Left ventricle myocardium inferior (tissue), 1 donor: ENCODE measurements at regions of chr6 and their contacts with region 1.

Region 1: DNA sequence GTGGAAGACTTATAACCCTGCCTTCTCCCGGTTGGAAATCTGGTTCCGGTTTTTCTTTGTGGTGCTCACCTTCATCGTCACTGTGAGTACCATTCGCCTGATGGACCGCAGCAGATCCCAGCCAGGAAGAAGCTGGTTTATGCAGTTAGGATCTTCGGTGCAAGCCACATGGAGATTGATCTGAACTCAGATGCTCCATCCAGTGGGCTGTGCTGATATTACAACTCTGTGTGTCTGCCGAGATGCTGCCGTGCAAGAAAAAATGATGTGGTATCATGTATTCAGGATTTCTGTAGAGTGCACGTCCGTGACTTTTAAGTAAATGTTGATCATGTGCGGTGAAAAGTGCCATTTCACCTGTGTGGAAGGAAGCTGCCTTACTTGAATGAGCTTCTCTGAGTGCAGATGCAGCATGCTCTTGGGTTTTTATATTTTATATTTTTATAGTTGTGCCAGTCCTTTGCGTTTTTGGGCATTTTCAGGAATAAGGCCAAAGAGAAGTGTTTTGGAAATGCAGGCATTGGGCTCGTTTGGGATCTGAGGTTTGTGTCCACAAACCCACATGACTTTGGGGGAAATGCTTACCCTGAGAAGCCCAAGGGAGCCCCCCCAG is 39.2 kb downstream of the DYNLT1 start:
- DNase-seq: no peak
- H3K4me3 ChIP-seq: no peak overlapping the region
- H3K27ac ChIP-seq: no peak overlapping the region
- H3K4me1 ChIP-seq: peaks cover 16% of the 10 kb centered on the region
- H3K27me3 ChIP-seq: no peaks in the 10 kb centered on the region
- CTCF ChIP-seq: peak; percentile 83

Region 2: DNA sequence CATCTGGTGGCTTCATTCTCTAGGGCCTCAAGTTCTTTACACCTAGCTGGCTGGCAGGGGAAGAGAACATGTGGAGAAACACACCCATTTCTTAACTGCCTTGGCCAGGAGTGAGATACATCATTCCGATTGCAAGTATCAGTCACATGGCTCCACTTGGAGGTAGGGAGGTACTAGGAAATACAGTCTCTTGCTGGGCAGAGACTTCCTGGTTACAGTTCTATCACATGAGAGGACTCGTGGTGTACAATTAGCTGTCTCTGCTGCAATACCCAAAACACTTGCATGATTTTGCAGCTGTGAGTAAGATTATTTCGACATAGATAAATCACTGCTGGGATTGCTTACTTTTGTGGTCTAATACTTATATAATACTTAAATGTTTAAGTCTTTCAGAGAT is 386.1 kb before region 1 on chr6:
- intact Hi-C with region 1: loop called (anchors 5 kb)
- DNase-seq: no peak
- H3K4me3 ChIP-seq: no peak overlapping the region
- H3K27ac ChIP-seq: no peak overlapping the region
- H3K4me1 ChIP-seq: no peaks in the 10 kb centered on the region
- H3K27me3 ChIP-seq: no peaks in the 10 kb centered on the region
- CTCF ChIP-seq: no peak

Region 3: GRCh38 chr6:158518191-158519127 is 86.9 kb before region 1 on chr6:
- intact Hi-C with region 1: loop called (anchors 10 kb)
- DNase-seq: peak; percentile 30
- H3K4me3 ChIP-seq: peak overlapping the region; percentile 35
- H3K27ac ChIP-seq: no peak overlapping the region
- H3K4me1 ChIP-seq: peaks cover 12% of the 10 kb centered on the region
- H3K27me3 ChIP-seq: peaks cover 74% of the 10 kb centered on the region
- CTCF ChIP-seq: peak; percentile 62